Tibial artery (tissue), 4 donors: ENCODE measurements at regions of chr4 and their contacts with region 1.

Region 1: DNA sequence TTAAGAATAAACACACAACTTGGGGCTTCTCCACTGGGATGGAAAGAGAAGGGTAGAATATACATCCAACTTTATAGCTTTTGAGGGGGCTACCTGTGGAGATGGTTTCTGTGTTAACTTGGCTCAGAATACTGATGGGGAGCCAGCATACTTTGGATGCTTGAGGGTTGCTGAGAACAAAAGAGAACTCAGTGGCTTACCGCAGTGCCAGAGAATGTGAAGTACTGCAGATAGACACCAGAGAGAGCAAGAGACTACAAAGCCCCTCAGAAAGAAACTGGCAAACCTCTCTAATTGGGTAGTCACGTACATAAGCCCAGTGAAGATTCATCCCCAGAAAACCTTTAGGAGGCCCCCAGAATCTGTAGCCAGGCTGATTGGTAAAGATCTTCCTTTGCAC is 214.4 kb downstream of the DCHS2 start:
- DNase-seq: no peak
- H3K4me3 ChIP-seq: no peak overlapping the region
- H3K27ac ChIP-seq: no peak overlapping the region
- H3K4me1 ChIP-seq: no peaks in the 10 kb centered on the region
- H3K27me3 ChIP-seq: no peaks in the 10 kb centered on the region
- CTCF ChIP-seq: no peak

Region 2: DNA sequence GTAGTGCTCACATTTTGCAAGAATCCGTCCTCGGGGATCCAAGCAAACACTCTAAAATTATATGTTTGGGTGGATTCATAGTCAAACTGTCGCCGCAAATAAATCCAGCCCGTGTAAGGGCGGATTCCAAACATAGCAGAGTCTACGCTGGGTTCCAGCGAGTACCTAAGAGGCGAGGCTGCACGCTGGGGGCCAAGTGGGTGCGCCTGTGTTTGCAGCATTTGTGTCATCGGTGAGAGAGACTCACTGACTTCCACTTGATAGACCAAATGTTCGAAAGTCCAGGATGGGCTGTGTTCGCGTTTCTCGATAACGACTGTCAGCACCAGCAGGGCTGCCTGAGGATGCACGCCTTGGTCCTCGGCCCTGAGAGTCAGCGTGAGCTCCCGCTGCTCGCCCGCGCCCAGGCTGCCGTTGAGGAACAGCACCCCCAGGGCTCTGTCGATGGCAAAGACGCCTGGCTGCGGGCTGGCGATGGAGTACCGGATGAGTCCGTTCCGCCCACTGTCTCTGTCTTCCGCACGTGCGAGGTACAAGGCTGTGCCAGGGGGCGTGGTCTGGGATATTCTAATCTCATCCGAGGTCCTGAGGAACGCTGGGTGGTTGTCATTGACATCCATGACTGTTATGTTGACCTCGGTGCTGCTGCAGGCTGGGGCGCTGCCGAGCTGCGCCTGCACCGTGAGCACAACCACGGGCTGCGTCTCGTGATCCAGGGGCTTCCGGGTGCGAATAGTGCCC is 55.7 kb after region 1 on chr4:
- intact Hi-C with region 1: no loop called
- DNase-seq: peak in 1 of 2 donors; percentile 22
- H3K4me3 ChIP-seq: peak overlapping the region; percentile 18 to 44
- H3K27ac ChIP-seq: no peak overlapping the region
- H3K4me1 ChIP-seq: peaks cover 0 to 10% (median 8%) of the 10 kb centered on the region in 4 donors
- H3K27me3 ChIP-seq: peaks cover 0 to 34% of the 10 kb centered on the region in 2 donors
- CTCF ChIP-seq: no peak

Region 3: GRCh38 chr4:156015081-156015480 is 1737.9 kb after region 1 on chr4:
- intact Hi-C with region 1: loop called (anchors 5 kb)
- DNase-seq: no peak
- H3K4me3 ChIP-seq: no peak overlapping the region
- H3K27ac ChIP-seq: no peak overlapping the region
- H3K4me1 ChIP-seq: no peaks in the 10 kb centered on the region
- H3K27me3 ChIP-seq: no peaks in the 10 kb centered on the region
- CTCF ChIP-seq: no peak